ENCODE measurements at regions of chr7 and their contacts with region 1.

Region 1: GRCh38 chr7:5237286-5237685 is 45.5 kb upstream of the SLC29A4 start:
- DNase-seq: no peak
- H3K4me3 ChIP-seq: no peak overlapping the region
- H3K27ac ChIP-seq: no peak overlapping the region
- H3K4me1 ChIP-seq: peaks cover 2% of the 10 kb centered on the region
- H3K27me3 ChIP-seq: no peaks in the 10 kb centered on the region
- CTCF ChIP-seq: no peak
- POLR2A ChIP-seq: no peak

Region 2: DNA sequence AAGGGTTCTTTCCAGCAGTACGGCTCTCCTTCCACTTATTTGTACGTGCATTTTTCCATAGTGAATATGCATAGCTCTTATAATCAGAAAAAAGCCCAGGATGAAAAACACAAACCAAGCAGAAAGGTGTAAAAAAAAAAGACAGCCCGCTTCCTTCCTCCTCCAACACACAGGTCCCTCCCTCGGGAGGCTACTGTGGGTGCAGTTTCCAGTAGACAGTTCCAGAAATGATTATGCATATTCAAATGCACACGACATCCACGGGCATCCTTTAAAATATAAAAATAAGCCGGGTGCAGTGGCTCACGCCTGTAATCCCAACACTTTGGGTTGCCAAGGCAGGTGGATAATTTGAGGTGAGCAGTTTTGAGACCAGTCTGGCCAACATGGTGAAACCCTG is 126.4 kb after region 1 on chr7:
- CTCF ChIA-PET with region 1: interaction called, 21 read pairs
- POLR2A ChIA-PET with region 1: no interaction called
- dilution Hi-C with region 1: no loop called
- intact Hi-C with region 1: loop called (anchors 1 kb)
- DNase-seq: no peak
- H3K4me3 ChIP-seq: no peak overlapping the region
- H3K27ac ChIP-seq: no peak overlapping the region
- H3K4me1 ChIP-seq: no peaks in the 10 kb centered on the region
- H3K27me3 ChIP-seq: no peaks in the 10 kb centered on the region
- CTCF ChIP-seq: no peak
- POLR2A ChIP-seq: no peak

Region 3: GRCh38 chr7:5457245-5457735 is 220.0 kb after region 1 on chr7:
- CTCF ChIA-PET with region 1: interaction called, 69 read pairs
- POLR2A ChIA-PET with region 1: no interaction called
- dilution Hi-C with region 1: no loop called
- intact Hi-C with region 1: no loop called
- DNase-seq: no peak
- H3K4me3 ChIP-seq: no peak overlapping the region
- H3K27ac ChIP-seq: peak overlapping the region; percentile 3
- H3K4me1 ChIP-seq: peaks cover 4% of the 10 kb centered on the region
- H3K27me3 ChIP-seq: no peaks in the 10 kb centered on the region
- CTCF ChIP-seq: peak in 1 of 2 donors; percentile 8
- POLR2A ChIP-seq: no peak

Region 4: DNA sequence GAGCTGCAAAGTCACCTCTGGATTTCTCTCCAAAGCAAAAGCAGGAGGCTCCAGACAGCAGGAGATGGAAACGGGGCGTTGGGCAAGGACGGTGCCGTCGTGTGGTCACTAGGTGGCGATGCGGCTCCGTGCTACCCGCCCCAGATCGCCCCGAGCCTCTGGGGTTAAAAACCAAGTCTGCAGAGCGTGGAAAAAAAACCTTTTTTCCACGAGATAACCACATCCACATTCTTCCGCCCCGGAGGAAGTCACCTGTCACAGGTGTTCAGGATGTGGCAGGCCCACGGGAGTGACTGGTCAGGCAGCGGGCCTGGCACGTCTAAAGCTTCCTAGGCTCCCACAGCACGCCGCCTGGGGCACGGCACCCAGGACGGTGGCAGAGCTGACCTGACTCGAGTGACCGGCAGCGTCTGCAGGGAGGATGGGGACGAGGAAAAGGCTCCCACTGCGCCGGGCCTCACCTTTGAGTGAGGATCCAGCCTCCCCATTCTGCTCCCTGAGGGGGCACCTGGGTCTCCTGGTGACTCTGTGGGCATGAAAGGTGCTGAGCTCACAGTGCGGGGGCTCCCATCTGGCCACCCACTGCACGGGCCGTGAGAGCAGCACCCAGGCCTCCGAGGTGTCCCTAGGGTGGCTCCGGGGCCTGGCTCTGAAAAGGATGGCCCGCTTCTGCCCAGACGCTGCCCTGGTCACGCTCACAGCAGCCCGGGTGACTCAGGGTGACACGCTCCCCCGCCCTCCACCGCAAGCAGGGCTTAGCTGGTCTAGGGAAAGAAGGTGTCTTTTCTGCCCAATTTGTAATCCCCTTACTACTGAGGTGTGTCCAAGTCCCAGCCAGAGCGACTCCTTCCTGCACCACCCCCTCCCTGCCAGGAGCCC is 257.6 kb after region 1 on chr7:
- CTCF ChIA-PET with region 1: interaction called, 14 read pairs
- POLR2A ChIA-PET with region 1: no interaction called
- dilution Hi-C with region 1: no loop called
- intact Hi-C with region 1: no loop called
- DNase-seq: peak; percentile 72
- H3K4me3 ChIP-seq: no peak overlapping the region
- H3K27ac ChIP-seq: no peak overlapping the region
- H3K4me1 ChIP-seq: peaks cover 4% of the 10 kb centered on the region
- H3K27me3 ChIP-seq: no peaks in the 10 kb centered on the region
- CTCF ChIP-seq: peak; percentile 79 to 96
- POLR2A ChIP-seq: no peak

Region 5: GRCh38 chr7:5704534-5704922 is 467.2 kb after region 1 on chr7:
- CTCF ChIA-PET with region 1: no interaction called
- POLR2A ChIA-PET with region 1: no interaction called
- dilution Hi-C with region 1: no loop called
- intact Hi-C with region 1: loop called (anchors 1 kb)
- DNase-seq: peak; percentile 87
- H3K4me3 ChIP-seq: no peak overlapping the region
- H3K27ac ChIP-seq: no peak overlapping the region
- H3K4me1 ChIP-seq: no peaks in the 10 kb centered on the region
- H3K27me3 ChIP-seq: no peaks in the 10 kb centered on the region
- CTCF ChIP-seq: peak; percentile 80 to 81
- POLR2A ChIP-seq: no peak

Measured in endothelial cell of umbilical vein (primary cell).